PC-3 (cell line): ENCODE measurements at regions of chr13 and their contacts with region 1.

Region 1: GRCh38 chr13:59677966-59678814 is 485.5 kb downstream of the DIAPH3 start:
- DNase-seq: peak; percentile 68
- ATAC-seq: peak; percentile 71
- H3K4me3 ChIP-seq: no peak overlapping the region
- H3K27ac ChIP-seq: no peak overlapping the region
- H3K4me1 ChIP-seq: no peaks in the 10 kb centered on the region
- H3K27me3 ChIP-seq: no peaks in the 10 kb centered on the region
- CTCF ChIP-seq: peak; percentile 78

Region 2: DNA sequence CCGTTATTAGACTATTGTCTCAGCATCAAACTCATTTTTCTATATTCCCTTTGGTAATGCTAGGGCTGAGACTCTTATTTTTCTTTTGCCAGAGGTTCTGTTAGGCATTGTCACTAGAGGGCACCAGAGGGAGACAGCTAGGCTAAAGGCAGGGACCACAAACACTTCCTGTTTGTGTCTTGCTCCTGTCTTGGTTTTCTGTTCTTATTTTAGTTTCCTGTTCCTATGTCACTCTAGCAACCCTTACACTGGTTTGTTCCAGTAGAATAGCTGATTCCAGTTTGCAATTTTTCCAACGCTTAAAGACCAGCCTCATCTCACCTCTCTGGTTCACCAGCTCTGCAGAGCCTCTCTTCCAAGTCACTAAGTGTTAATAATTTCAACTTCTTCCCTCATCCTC is 286.5 kb before region 1 on chr13:
- CTCF ChIA-PET with region 1: interaction called, 7 read pairs
- POLR2A ChIA-PET with region 1: no interaction called
- intact Hi-C with region 1: loop called (anchors 1 kb)
- DNase-seq: peak; percentile 62
- ATAC-seq: peak; percentile 74
- H3K4me3 ChIP-seq: no peak overlapping the region
- H3K27ac ChIP-seq: no peak overlapping the region
- H3K4me1 ChIP-seq: no peaks in the 10 kb centered on the region
- H3K27me3 ChIP-seq: no peaks in the 10 kb centered on the region
- CTCF ChIP-seq: peak; percentile 77

Region 3: DNA sequence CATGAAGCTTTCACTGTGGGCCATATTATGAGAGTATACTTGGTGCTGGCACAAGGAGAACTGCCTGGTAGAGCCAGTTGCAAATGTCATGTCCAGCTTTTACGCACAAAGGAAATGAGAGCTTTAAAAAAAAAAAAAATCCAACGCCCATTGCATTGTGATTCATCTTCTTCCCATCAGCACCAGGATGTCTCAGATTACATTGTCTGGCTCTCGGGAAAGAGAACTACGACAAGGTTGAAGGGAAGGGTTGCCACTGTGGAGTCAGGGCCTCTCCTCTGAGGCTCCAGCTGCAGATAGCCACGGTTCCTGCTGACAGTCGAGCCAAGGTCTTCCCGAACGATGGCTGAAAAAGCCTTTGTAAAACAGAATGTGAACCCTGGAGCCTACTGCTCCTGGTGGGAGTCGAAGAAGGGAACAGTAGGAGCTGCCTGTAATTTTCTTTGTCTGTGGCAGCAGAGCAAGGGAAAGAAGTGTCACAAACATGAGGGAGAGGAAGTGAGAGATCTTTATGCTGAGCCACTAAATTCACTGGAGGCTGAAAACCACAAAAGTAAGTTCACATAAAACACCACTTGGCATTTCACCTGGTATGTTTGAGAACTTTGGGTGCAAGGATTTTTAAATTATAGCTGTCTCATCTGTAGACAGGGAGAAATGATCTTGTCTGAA is 219.1 kb before region 1 on chr13:
- CTCF ChIA-PET with region 1: no interaction called
- POLR2A ChIA-PET with region 1: no interaction called
- intact Hi-C with region 1: loop called (anchors 5 kb)
- DNase-seq: peak; percentile 76
- ATAC-seq: peak; percentile 95
- H3K4me3 ChIP-seq: peak overlapping the region; percentile 46
- H3K27ac ChIP-seq: peak overlapping the region; percentile 97
- H3K4me1 ChIP-seq: peaks cover 22% of the 10 kb centered on the region
- H3K27me3 ChIP-seq: no peaks in the 10 kb centered on the region
- CTCF ChIP-seq: no peak

Region 4: DNA sequence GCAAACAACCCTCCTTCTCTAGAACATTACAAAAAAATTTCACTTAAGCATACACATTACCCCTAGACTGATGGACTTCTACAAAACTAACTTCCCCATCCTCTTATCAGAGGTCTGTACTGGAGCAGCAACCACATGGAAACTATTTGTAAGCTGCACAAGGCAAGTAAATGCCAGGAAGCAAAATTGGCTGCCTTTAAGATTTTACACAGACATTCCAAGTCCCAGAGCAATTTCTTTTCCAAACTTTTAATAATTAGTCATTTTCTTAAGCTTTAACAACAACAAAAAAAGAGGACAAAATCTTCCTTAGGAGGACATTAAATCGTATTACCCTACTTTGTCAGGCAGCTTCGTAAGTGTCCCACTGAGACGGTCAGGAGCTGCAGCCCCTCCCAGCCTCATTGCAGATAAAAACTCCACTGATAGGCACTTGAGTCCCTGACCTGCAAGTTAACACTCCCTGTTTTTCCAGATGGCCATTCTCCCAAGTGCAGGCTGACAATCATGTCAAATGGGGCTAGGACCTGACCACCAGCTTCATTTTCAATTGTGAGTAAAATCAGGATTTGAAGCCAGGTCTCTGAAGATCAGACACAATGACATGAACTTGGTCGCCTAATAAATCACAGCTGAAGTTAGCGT is 194.6 kb before region 1 on chr13:
- CTCF ChIA-PET with region 1: no interaction called
- POLR2A ChIA-PET with region 1: no interaction called
- intact Hi-C with region 1: no loop called
- DNase-seq: no peak
- ATAC-seq: no peak
- H3K4me3 ChIP-seq: no peak overlapping the region
- H3K27ac ChIP-seq: no peak overlapping the region
- H3K4me1 ChIP-seq: no peaks in the 10 kb centered on the region
- H3K27me3 ChIP-seq: no peaks in the 10 kb centered on the region
- CTCF ChIP-seq: no peak

Region 5: DNA sequence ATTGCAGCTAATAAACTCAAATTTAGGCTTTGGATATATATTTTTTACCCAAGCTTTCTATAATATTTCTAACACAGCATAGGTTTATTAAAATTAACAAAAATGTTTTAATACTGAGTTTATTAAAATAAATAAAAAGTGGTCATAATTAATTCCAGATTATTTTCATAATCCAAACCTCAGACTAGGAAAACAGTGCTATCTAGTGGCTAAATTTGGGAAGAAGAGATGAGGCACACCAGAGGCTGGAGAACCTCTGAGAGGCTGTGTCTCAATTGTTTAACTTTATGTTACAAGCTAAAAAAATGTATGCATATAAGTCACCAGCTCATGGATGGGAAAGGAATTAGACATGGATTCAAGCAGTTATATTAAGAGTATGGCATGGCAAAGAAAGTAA is 93.1 kb after region 1 on chr13:
- CTCF ChIA-PET with region 1: interaction called, 7 read pairs
- POLR2A ChIA-PET with region 1: no interaction called
- intact Hi-C with region 1: loop called (anchors 1 kb)
- DNase-seq: peak; percentile 38
- ATAC-seq: no peak; the same call in 1 of the 2 replicates
- H3K4me3 ChIP-seq: no peak overlapping the region
- H3K27ac ChIP-seq: no peak overlapping the region
- H3K4me1 ChIP-seq: peaks cover 10% of the 10 kb centered on the region
- H3K27me3 ChIP-seq: no peaks in the 10 kb centered on the region
- CTCF ChIP-seq: peak; percentile 69

Region 6: DNA sequence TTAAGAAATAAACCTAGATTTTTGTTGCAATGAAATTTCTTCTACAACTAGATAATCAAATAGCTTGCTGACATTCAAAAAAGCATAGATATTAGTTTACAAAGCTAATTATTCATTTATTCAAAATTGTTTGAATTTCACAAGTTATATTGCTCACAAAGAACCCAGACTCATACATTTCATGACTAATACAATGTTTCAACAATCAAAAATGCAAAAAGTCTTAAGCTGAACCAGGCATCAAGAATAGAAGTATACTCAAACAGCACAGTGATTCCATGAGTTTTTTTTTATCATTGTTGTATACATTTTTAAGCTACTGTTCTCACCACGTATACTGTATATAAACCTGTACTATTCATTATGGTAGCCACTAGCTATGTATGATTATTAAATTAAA is 434.6 kb after region 1 on chr13:
- CTCF ChIA-PET with region 1: no interaction called
- POLR2A ChIA-PET with region 1: no interaction called
- intact Hi-C with region 1: no loop called
- DNase-seq: no peak
- ATAC-seq: no peak
- H3K4me3 ChIP-seq: no peak overlapping the region
- H3K27ac ChIP-seq: no peak overlapping the region
- H3K4me1 ChIP-seq: no peaks in the 10 kb centered on the region
- H3K27me3 ChIP-seq: no peaks in the 10 kb centered on the region
- CTCF ChIP-seq: no peak

Region 7: GRCh38 chr13:60226507-60226906 is 548.3 kb after region 1 on chr13:
- CTCF ChIA-PET with region 1: interaction called, 3 read pairs
- POLR2A ChIA-PET with region 1: no interaction called
- intact Hi-C with region 1: loop called (anchors 1 kb)
- DNase-seq: peak; percentile 30
- ATAC-seq: peak; percentile 84
- H3K4me3 ChIP-seq: no peak overlapping the region
- H3K27ac ChIP-seq: no peak overlapping the region
- H3K4me1 ChIP-seq: no peaks in the 10 kb centered on the region
- H3K27me3 ChIP-seq: peaks cover 20% of the 10 kb centered on the region; the same call in 1 of the 2 replicates
- CTCF ChIP-seq: peak; percentile 53

Region 8: DNA sequence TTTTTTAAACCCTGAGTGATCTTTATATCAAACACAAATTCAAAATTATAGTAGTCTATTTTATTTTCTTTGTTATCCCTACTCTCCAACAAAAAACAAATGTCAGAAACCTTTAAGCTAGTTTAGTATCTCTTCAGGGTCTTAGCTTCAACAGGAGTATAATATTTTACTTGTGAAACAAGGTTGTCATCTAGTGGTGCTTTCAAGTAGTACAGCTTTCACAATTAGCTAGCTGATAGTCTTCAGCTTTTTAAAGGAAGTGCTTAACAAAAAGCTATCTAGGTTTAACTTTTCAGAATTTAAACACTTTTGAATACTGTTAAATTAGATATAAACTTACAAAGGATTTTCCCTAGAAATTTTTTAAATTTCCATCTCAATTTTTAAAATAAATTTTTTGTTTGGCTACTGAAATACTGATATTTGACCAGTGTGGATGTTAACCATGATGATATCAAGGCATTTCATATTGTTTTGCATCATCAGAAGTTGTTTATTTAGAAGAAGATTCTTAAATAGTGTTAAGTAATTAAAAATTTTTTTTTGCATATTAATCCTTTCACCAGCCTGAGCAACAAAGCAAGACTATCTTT is 753.0 kb after region 1 on chr13:
- CTCF ChIA-PET with region 1: interaction called, 3 read pairs
- POLR2A ChIA-PET with region 1: no interaction called
- intact Hi-C with region 1: loop called (anchors 2 kb)
- DNase-seq: peak; percentile 61
- ATAC-seq: peak; percentile 73
- H3K4me3 ChIP-seq: no peak overlapping the region
- H3K27ac ChIP-seq: no peak overlapping the region
- H3K4me1 ChIP-seq: no peaks in the 10 kb centered on the region
- H3K27me3 ChIP-seq: no peaks in the 10 kb centered on the region
- CTCF ChIP-seq: peak; percentile 77